Activated CD8-positive, alpha-beta T cell treated with anti-CD3 and anti-CD28 coated beads for 36 hours (primary cell): ENCODE measurements at regions of chr4 and their contacts with region 1.

Region 1: DNA sequence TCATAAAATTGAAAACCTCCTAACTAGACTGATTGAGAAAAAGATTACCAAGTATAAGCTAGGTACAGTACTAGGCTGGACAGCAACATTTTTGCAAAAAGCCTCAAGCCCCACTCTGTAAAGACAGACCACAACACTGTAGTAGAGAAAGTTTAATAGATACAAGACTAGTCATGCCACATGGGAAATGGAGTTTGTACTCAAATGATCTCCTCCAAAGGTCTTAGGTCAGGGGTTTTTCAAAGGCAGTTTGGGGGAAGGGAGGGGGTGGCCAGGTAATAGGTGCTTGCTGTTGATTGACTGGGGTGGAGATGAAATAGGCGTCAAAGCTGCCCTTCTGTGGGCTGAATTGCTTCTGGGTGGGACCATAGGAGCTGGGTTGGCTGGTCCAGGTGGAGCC is 14.2 kb downstream of the CNGA1 start:
- DNase-seq: no peak
- ATAC-seq: no peak
- H3K4me3 Mint-ChIP-seq: no peak overlapping the region
- H3K27ac Mint-ChIP-seq: no peak overlapping the region
- H3K4me1 Mint-ChIP-seq: no peaks in the 10 kb centered on the region
- H3K27me3 Mint-ChIP-seq: peaks cover 2% of the 10 kb centered on the region
- CTCF ChIP-seq: no peak

Region 2: DNA sequence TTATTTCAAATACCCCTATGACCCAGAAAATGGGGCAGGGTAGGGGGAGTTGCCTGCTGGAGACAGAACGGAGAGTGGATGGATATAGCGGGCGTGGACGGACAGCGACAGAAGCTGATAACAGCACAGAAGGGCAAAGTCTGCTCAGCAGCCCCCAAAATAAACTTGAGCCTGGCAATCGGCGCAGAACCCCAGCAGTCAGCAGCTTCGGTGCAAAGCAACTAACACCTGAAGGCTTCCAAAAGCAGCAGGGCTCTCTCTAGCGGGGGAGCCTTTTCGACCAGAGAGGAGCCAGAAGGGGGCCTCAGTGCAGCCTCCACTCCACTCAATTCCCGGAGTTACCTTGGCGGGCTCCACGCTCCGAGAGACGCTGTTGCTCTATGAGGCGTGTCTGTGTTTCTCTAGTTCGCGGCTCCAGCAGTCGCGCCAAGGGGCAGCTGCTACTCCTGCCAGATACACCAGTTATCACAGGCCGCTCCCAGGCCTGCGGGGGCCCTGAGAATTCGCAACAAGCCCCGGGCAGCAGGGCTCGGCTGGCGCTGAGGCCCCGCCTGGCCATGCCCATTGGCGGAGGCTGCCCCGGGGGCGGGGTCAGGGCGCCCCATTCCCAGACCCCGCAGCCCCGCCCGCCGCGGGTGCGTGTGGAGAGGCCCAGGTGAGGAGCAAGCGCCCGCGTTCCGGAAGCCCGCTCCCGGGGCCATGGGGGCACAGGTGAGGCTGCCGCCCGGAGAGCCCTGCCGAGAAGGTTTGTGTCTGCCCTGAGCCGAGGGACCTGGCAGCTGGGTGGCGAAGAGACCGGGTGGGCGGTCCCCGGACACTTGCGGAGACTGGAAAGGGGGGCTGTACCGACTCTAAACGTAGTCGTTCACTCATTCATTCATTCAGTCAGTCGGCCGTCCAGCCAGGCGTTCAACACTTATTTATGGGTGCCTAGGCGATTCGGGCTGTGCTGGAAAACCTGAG is 14.2 kb after region 1 on chr4 and contains the starts of genes CNGA1 and NIPAL1:
- CTCF ChIA-PET with region 1: interaction called, 27 read pairs
- POLR2A ChIA-PET with region 1: interaction called, 4 read pairs
- intact Hi-C with region 1: no loop called
- DNase-seq: peak; percentile 69
- ATAC-seq: peak; percentile 89
- H3K4me3 Mint-ChIP-seq: peak within 1 kb of the TSS; percentile 79
- H3K27ac Mint-ChIP-seq: peak within 1 kb of the TSS; percentile 42
- H3K4me1 Mint-ChIP-seq: peaks cover 23% of the 10 kb centered on the region
- H3K27me3 Mint-ChIP-seq: peaks cover 17% of the 10 kb centered on the region
- CTCF ChIP-seq: no peak
- total RNA-seq, gene CNGA1: 0.50 TPM in 1 of 2 experiments, not detected in the other
- total RNA-seq, gene NIPAL1: 1.1 to 1.9 TPM

Region 3: DNA sequence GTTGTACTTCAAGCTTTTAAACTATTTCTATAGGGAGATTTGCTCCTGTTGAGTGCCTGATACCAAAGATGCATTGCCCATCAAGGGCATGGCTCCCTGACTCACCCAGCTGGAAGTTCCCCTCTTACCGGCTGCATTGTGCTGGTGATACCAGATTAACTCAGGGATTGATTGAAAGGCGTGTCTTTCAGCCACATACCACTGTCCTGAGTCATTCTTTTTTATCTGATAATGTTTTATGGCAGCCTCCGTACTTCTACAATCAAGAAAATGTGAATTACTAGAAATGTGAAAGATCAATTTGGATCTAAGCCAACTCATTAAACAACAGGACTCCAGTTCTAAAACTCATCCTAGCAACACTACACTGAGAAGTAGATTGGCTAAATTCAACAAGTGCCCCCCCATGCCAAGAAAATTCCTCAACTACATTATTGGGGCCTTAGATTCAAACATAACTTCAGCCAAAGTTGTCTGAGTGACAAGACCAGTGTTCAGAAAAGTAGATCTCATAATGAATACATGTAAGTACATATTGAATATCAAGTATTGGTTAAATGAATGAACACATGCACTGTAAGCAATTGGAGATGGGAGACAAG is 91.8 kb after region 1 on chr4:
- CTCF ChIA-PET with region 1: interaction called, 28 read pairs
- POLR2A ChIA-PET with region 1: no interaction called
- intact Hi-C with region 1: no loop called
- DNase-seq: peak; percentile 71
- ATAC-seq: peak; percentile 99
- H3K4me3 Mint-ChIP-seq: no peak overlapping the region
- H3K27ac Mint-ChIP-seq: peak overlapping the region; percentile 65
- H3K4me1 Mint-ChIP-seq: peaks cover 26% of the 10 kb centered on the region
- H3K27me3 Mint-ChIP-seq: no peaks in the 10 kb centered on the region
- CTCF ChIP-seq: no peak